ENCODE measurements at regions of chr17 and their contacts with region 1.

Region 1: GRCh38 chr17:28540231-28540630 is 12.2 kb downstream of the UNC119 start:
- DNase-seq: no peak
- ATAC-seq: no peak
- H3K4me3 Mint-ChIP-seq: no peak overlapping the region
- H3K27ac Mint-ChIP-seq: no peak overlapping the region
- H3K4me1 Mint-ChIP-seq: peaks cover 12% of the 10 kb centered on the region
- H3K27me3 Mint-ChIP-seq: no peaks in the 10 kb centered on the region
- CTCF ChIP-seq: no peak

Region 2: GRCh38 chr17:28427371-28427770 is 112.9 kb before region 1 on chr17:
- CTCF ChIA-PET with region 1: no interaction called
- POLR2A ChIA-PET with region 1: no interaction called
- DNase-seq: no peak
- ATAC-seq: no peak
- H3K4me3 Mint-ChIP-seq: no peak overlapping the region
- H3K27ac Mint-ChIP-seq: no peak overlapping the region
- H3K4me1 Mint-ChIP-seq: no peaks in the 10 kb centered on the region
- H3K27me3 Mint-ChIP-seq: peaks cover 3% of the 10 kb centered on the region; the same call in 1 of the 2 replicates
- CTCF ChIP-seq: no peak

Region 3: DNA sequence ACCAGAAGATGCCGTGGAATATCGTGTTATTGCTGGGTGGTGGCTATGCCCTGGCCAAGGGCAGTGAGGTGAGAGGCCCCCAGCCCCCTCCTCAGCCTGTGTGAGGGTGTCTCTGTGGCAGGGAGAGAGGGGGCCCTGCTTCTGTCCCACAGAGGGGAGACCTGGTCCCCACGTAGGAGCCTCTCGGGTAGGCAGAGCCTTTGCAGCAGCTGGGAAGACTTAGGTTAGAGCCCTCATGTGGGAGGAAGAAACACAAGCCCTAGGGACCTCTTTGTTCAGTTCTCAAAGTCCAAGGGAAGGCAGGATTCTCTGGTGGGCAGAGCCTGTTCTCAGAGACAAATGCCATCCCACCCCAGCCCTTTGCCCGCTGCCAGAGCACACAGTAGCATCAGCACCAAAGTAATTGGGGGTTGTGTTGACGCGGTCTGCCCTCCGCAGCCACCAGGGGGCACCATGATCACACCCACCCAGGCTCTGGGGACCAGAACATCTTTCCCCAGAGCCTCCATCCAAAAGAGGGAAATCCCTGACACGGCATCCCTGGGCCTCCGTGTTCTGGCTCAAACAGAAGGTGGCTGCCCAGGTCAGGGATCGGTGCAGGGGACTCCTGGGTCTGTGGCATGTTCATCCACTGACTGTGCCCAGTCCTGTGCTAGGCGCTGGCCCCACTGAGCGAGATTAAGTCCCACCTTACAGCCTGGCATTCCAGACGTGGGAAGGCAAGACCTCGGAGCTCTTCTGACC is 45.6 kb before region 1 on chr17:
- CTCF ChIA-PET with region 1: interaction called, 42 read pairs
- POLR2A ChIA-PET with region 1: no interaction called
- DNase-seq: peak; percentile 89
- ATAC-seq: peak; percentile 74
- H3K4me3 Mint-ChIP-seq: no peak overlapping the region
- H3K27ac Mint-ChIP-seq: no peak overlapping the region
- H3K4me1 Mint-ChIP-seq: peaks cover 12% of the 10 kb centered on the region
- H3K27me3 Mint-ChIP-seq: peaks cover 5% of the 10 kb centered on the region
- CTCF ChIP-seq: peak; percentile 88

Region 4: GRCh38 chr17:28503420-28503819 is 36.8 kb before region 1 on chr17:
- CTCF ChIA-PET with region 1: interaction called, 42 read pairs
- POLR2A ChIA-PET with region 1: no interaction called
- DNase-seq: no peak
- ATAC-seq: no peak
- H3K4me3 Mint-ChIP-seq: no peak overlapping the region
- H3K27ac Mint-ChIP-seq: no peak overlapping the region
- H3K4me1 Mint-ChIP-seq: peaks cover 24% of the 10 kb centered on the region
- H3K27me3 Mint-ChIP-seq: peaks cover 3% of the 10 kb centered on the region
- CTCF ChIP-seq: no peak

Region 5: GRCh38 chr17:28514571-28515002 is 25.6 kb before region 1 on chr17:
- CTCF ChIA-PET with region 1: no interaction called
- POLR2A ChIA-PET with region 1: no interaction called
- DNase-seq: no peak
- ATAC-seq: no peak
- H3K4me3 Mint-ChIP-seq: no peak overlapping the region
- H3K27ac Mint-ChIP-seq: no peak overlapping the region
- H3K4me1 Mint-ChIP-seq: no peaks in the 10 kb centered on the region
- H3K27me3 Mint-ChIP-seq: peaks cover 7% of the 10 kb centered on the region
- CTCF ChIP-seq: no peak

Region 6: GRCh38 chr17:28563475-28563874 is 23.2 kb after region 1 on chr17:
- CTCF ChIA-PET with region 1: no interaction called
- POLR2A ChIA-PET with region 1: no interaction called
- DNase-seq: no peak
- ATAC-seq: no peak
- H3K4me3 Mint-ChIP-seq: no peak overlapping the region
- H3K27ac Mint-ChIP-seq: no peak overlapping the region
- H3K4me1 Mint-ChIP-seq: no peaks in the 10 kb centered on the region
- H3K27me3 Mint-ChIP-seq: no peaks in the 10 kb centered on the region
- CTCF ChIP-seq: no peak

Measured in WTC11 (cell line).